Activated CD4-positive, alpha-beta memory T cell treated with anti-CD3 and anti-CD28 coated beads for 36 hours (primary cell): ENCODE measurements at regions of chr1 and their contacts with region 1.

Region 1: GRCh38 chr1:230310381-230311163 is 115.6 kb downstream of the PGBD5 start:
- DNase-seq: peak; percentile 77
- H3K4me3 Mint-ChIP-seq: no peak overlapping the region
- H3K27ac Mint-ChIP-seq: no peak overlapping the region
- H3K4me1 Mint-ChIP-seq: peaks cover 14% of the 10 kb centered on the region
- H3K27me3 Mint-ChIP-seq: peaks cover 6% of the 10 kb centered on the region

Region 2: DNA sequence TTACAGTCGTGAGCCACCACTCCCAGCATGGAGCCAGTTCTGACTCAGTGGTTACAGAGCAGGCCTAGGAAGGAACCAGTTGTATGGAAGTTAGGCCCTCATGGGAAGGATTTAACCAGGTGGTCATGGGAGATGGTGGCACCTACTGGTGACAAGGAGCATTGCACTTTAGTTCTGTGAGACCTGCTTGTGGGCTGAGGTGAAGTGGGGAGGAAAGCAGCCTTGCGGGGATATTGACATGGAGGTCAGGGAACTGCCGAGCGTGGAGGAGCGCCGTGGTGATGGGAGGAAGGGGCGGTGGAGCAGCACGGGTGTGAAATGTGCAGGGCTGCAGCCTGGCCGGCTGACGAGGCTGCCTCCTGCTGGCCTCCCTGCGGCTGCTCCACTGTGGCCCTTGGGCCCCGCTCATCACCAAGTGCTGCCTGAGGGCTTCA is 143.1 kb before region 1 on chr1:
- CTCF ChIA-PET with region 1: interaction called, 5 read pairs
- POLR2A ChIA-PET with region 1: no interaction called
- intact Hi-C with region 1: loop called (anchors 5 kb)
- DNase-seq: peak; percentile 55
- H3K4me3 Mint-ChIP-seq: no peak overlapping the region
- H3K27ac Mint-ChIP-seq: no peak overlapping the region
- H3K4me1 Mint-ChIP-seq: peaks cover 34% of the 10 kb centered on the region
- H3K27me3 Mint-ChIP-seq: no peaks in the 10 kb centered on the region

Region 3: GRCh38 chr1:230282157-230282556 is 28.4 kb before region 1 on chr1:
- CTCF ChIA-PET with region 1: no interaction called
- POLR2A ChIA-PET with region 1: no interaction called
- intact Hi-C with region 1: no loop called
- DNase-seq: peak; percentile 8
- H3K4me3 Mint-ChIP-seq: no peak overlapping the region
- H3K27ac Mint-ChIP-seq: no peak overlapping the region
- H3K4me1 Mint-ChIP-seq: peaks cover 10% of the 10 kb centered on the region
- H3K27me3 Mint-ChIP-seq: no peaks in the 10 kb centered on the region

Region 4: DNA sequence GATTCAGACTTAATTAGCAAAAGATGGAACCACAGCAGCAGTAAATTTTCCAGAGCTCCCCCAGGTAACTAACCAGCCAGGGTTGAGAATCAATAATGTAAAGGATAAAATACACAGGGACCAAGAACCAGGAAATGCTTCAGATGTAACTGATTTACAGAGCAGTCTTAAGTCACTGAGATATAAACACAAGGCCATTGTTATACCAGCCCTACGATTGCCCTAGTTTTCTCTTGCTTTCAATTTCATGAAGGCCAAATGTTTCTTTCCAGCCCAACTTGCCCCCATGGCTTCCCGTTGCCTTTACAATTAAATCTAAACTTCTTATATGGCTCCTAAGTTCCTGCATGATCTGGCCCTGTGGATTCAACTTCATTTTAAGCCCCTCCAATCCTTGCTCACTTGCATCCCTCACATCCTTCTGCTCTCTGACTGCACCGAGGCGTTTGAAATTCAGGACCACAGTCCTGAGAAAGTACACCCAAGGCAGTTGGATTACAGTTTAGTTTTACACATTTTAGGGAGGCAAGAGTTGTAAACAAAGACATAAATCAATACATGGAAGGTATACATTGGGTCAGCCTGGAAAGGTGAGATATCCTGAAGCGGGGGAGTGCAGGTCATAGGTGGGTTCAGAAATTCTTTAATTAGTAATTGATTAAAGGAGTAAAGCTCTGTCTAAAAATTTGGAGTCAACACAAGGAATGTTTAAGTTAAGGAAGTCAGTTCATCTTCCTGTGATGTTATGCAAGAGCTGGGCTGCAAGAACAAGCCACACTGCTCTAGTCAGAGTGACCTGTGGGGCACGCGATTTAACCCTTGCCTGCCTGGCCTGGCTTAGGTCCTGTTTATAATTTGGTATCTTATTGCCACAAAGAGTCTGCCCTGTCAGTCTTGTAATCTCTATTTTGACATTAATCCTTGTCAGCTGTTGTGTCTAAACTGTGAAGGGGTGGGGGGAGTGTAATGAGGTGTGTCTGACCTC is 261.8 kb after region 1 on chr1:
- CTCF ChIA-PET with region 1: no interaction called
- POLR2A ChIA-PET with region 1: no interaction called
- intact Hi-C with region 1: no loop called
- DNase-seq: no peak
- H3K4me3 Mint-ChIP-seq: no peak overlapping the region
- H3K27ac Mint-ChIP-seq: no peak overlapping the region
- H3K4me1 Mint-ChIP-seq: peaks cover 9% of the 10 kb centered on the region
- H3K27me3 Mint-ChIP-seq: peaks cover 18% of the 10 kb centered on the region